PC-3 (cell line): ENCODE measurements at regions of chr4 and their contacts with region 1.

Region 1: DNA sequence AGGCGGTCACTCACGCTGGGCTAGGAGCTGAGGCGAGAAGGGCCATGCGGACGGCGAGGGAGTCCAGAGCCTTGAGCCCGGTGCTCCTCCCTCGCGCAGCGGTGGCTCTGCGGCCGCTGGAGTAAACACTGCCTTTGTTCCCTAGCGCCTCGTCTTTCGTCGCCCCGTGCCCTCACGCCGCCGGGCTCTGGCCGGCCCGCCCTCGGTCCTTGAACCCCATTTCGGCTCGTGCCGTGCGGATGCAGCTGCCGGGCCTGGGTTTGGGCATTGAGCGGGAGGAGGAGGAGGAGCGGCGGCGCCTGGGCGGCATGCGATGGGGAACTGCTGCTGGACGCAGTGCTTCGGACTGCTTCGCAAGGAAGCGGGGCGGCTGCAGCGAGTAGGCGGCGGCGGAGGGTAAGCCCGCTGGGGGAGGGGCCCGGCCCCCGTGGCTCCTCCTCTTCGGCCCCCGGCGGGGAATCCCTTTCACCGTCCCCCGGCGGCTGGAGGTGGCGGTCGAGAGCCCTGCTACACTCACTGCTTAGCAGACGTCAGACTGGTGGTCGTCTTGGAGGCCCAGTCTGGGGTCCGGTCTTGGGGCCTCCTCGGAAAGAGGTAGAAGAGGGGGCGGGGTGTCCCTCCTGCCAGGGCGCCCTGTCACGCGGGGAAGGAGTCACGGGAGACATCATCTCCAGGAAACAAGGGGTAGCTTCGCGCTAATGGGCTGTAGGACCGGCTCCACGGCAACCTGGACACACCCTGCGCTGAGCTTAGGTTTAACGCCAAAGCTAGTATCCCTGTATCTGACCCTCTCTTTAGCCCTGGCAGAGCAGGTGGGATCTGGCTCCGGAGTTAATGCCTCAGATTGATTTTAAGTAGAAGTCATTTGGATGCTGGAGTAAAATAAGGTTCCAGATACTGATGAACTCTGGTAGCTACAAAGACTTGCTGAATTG is at the start of gene AP1AR:
- DNase-seq: peak; percentile 66
- ATAC-seq: peak; percentile 60
- H3K4me3 ChIP-seq: peak within 1 kb of the TSS; percentile 99
- H3K27ac ChIP-seq: peak within 1 kb of the TSS; percentile 85
- H3K4me1 ChIP-seq: peaks cover 28% of the 10 kb centered on the region
- H3K27me3 ChIP-seq: no peaks in the 10 kb centered on the region
- CTCF ChIP-seq: peak; percentile 38; the same call in 1 of the 2 replicates
- total RNA-seq, gene AP1AR: 21.3 and 34.6 TPM in 2 replicates

Region 2: DNA sequence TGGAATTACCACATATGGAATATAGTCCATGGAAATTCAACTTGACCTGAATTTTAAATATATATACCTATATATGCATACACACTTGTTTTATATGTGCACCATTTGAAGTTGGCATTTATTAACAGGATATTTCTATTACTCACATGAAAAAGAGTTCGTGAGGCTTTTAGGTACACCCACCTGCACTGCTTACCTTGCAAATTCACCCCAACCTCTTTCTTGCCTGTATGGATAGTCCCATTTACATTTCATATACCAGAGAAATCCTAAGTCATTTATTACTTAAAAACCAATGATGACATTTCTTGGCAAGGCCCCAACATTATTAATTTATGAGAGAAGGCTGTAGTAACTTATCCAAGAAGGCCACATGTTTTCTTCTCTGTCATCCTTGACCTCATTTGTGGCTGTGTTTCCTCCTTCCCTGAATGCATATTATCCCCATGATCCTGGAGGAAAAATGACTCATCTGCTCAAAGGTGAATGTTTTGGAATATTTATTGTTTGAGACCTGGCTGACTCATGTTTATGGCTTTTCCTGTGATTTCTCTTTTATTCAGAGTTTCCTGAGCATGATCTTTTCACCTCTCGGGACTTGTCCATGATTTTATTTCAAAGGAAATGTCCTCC is 149.0 kb before region 1 on chr4:
- CTCF ChIA-PET with region 1: interaction called, 4 read pairs
- POLR2A ChIA-PET with region 1: no interaction called
- intact Hi-C with region 1: loop called (anchors 5 kb)
- DNase-seq: peak; percentile 97
- ATAC-seq: peak; percentile 84
- H3K4me3 ChIP-seq: peak overlapping the region; percentile 33; the same call in 1 of the 2 replicates
- H3K27ac ChIP-seq: peak overlapping the region; percentile 94
- H3K4me1 ChIP-seq: peaks cover 41% of the 10 kb centered on the region
- H3K27me3 ChIP-seq: no peaks in the 10 kb centered on the region
- CTCF ChIP-seq: no peak

Region 3: GRCh38 chr4:112214390-112215264 is 17.4 kb before region 1 on chr4:
- CTCF ChIA-PET with region 1: interaction called, 3 read pairs
- POLR2A ChIA-PET with region 1: no interaction called
- intact Hi-C with region 1: loop called (anchors 1 kb)
- DNase-seq: peak; percentile 55
- ATAC-seq: peak; percentile 42; the same call in 1 of the 2 replicates
- H3K4me3 ChIP-seq: no peak overlapping the region
- H3K27ac ChIP-seq: no peak overlapping the region
- H3K4me1 ChIP-seq: no peaks in the 10 kb centered on the region
- H3K27me3 ChIP-seq: no peaks in the 10 kb centered on the region
- CTCF ChIP-seq: peak; percentile 54

Region 4: GRCh38 chr4:112523764-112524505 is 291.9 kb after region 1 on chr4:
- CTCF ChIA-PET with region 1: no interaction called
- POLR2A ChIA-PET with region 1: no interaction called
- intact Hi-C with region 1: no loop called
- DNase-seq: peak; percentile 71
- ATAC-seq: peak; percentile 92
- H3K4me3 ChIP-seq: peak overlapping the region; percentile 79
- H3K27ac ChIP-seq: no peak overlapping the region
- H3K4me1 ChIP-seq: no peaks in the 10 kb centered on the region
- H3K27me3 ChIP-seq: peaks cover 16% of the 10 kb centered on the region
- CTCF ChIP-seq: peak; percentile 83